Mammary epithelial cell (primary cell): ENCODE measurements at regions of chr22 and their contacts with region 1.

Region 1: DNA sequence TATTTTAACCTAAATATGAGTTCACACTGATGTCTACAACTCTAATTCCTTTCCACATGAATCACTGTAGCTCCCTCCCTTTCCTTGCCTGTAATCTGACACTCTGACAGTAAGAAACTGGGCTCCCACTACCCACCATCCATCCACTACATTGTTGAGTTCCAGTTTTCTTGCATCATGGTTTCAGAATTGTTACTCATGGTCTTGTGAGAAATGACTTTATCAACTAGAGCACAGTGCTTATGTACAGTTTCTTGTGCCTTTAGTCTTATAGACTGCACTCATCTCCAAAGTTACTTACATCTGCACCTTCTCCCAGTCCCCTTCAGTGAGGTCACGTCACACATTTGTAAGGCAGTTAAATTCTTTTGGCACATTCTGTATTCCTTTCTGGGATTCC is 78.6 kb downstream of the RTL6 start:
- DNase-seq: peak; percentile 27
- H3K4me3 ChIP-seq: no peak overlapping the region
- H3K27ac ChIP-seq: no peak overlapping the region
- H3K4me1 ChIP-seq: no peaks in the 10 kb centered on the region
- H3K27me3 ChIP-seq: no peaks in the 10 kb centered on the region
- CTCF ChIP-seq: no peak

Region 2: GRCh38 chr22:43553451-43554258 is 865.8 kb before region 1 on chr22:
- CTCF ChIA-PET with region 1: no interaction called
- dilution Hi-C with region 1: no loop called
- in situ Hi-C with region 1: no loop called
- intact Hi-C with region 1: no loop called
- DNase-seq: no peak
- H3K4me3 ChIP-seq: no peak overlapping the region
- H3K27ac ChIP-seq: no peak overlapping the region
- H3K4me1 ChIP-seq: no peaks in the 10 kb centered on the region
- H3K27me3 ChIP-seq: no peaks in the 10 kb centered on the region
- CTCF ChIP-seq: no peak

Region 3: DNA sequence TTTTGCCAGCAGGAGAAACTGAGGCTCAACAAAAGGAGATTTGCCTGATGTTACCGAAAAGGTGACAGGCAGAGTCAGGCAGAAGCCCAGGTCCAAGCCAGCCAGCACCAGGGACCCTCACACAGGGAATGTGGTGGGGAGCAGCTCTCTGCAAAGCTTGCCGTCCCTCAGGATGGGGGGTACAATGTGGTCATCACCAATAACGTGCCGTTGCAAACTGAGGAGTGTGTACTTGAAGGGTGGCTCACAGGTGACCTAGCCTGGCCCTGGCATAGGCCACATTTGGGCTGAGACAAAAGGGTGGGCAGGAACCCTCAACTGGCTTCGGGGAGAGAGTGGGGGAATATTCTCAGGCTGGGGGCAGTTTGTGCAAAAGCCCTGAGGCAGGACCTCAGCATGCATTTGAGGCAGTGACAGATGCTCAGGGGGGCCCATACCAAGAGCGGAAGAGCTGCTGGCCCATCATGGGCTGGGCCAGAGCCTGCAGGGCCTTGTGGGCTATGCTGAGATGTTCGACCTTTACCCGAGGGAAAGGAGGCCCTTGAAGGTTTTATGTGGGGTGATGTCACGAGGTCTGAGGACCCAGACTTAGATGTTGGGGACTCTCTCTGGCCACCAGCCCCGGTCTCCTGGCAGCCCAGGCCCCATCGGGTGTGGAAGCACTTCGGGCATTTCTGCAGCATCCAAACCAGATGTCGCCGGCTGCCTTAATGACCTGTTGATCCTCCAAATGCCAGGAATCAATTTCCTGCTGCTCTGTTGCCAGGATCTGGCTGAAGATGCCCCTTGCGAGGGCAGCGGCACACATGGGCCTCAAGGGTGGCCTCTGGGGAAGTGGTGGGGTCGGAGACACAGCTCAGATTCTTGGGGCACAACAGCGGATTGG is 49.3 kb before region 1 on chr22:
- CTCF ChIA-PET with region 1: no interaction called
- dilution Hi-C with region 1: no loop called
- in situ Hi-C with region 1: no loop called
- intact Hi-C with region 1: no loop called
- DNase-seq: no peak
- H3K4me3 ChIP-seq: no peak overlapping the region
- H3K27ac ChIP-seq: no peak overlapping the region
- H3K4me1 ChIP-seq: no peaks in the 10 kb centered on the region
- H3K27me3 ChIP-seq: no peaks in the 10 kb centered on the region
- CTCF ChIP-seq: no peak

Region 4: DNA sequence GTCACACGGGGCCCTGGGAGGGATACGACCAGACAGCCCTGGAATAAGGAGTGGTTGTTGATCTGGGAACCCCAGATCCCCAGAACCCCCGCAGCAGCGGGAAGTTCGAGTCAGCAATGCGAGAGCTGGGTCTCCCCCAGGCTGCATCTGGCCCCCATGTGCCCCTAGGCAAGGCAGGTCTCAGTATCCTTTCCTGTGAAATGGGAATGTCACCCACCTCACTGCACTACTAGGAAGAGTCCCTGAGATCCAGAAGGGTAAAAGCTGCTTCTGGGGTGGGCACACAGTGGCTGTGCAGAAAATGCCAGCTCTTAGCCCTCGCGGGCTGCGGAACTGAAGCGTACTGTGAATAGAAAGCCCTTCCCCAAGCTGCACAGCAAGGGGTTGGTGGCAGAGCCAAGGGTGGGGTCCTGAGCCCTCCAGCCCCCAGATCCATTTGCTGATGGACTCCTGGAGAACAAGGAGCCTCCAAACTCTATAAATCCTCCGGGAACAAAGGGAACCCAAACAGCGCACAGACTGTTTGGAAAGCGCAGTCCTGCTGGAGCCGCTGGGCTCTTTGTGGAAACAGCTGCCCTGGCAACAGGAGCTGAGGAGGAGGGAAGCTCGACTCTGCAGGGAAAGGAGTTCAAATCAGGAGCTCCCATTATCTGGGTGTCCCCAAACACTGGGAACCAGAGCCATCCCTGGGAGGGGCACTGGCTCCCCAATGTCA is 38.5 kb before region 1 on chr22:
- CTCF ChIA-PET with region 1: no interaction called
- dilution Hi-C with region 1: no loop called
- in situ Hi-C with region 1: no loop called
- intact Hi-C with region 1: no loop called
- DNase-seq: no peak
- H3K4me3 ChIP-seq: no peak overlapping the region
- H3K27ac ChIP-seq: no peak overlapping the region
- H3K4me1 ChIP-seq: no peaks in the 10 kb centered on the region
- H3K27me3 ChIP-seq: no peaks in the 10 kb centered on the region
- CTCF ChIP-seq: no peak

Region 5: GRCh38 chr22:44479662-44480061 is 60.2 kb after region 1 on chr22:
- CTCF ChIA-PET with region 1: no interaction called
- dilution Hi-C with region 1: loop called (anchors 5 kb)
- in situ Hi-C with region 1: no loop called
- intact Hi-C with region 1: no loop called
- DNase-seq: no peak
- H3K4me3 ChIP-seq: no peak overlapping the region
- H3K27ac ChIP-seq: no peak overlapping the region
- H3K4me1 ChIP-seq: no peaks in the 10 kb centered on the region
- H3K27me3 ChIP-seq: no peaks in the 10 kb centered on the region
- CTCF ChIP-seq: no peak